AG04449 (cell line): ENCODE measurements at regions of chr3 and their contacts with region 1.

Region 1: GRCh38 chr3:113287803-113288648 is 76.7 kb downstream of the BOC start:
- DNase-seq: no peak
- H3K4me3 ChIP-seq: no peak overlapping the region
- CTCF ChIP-seq: peak; percentile 88

Region 2: DNA sequence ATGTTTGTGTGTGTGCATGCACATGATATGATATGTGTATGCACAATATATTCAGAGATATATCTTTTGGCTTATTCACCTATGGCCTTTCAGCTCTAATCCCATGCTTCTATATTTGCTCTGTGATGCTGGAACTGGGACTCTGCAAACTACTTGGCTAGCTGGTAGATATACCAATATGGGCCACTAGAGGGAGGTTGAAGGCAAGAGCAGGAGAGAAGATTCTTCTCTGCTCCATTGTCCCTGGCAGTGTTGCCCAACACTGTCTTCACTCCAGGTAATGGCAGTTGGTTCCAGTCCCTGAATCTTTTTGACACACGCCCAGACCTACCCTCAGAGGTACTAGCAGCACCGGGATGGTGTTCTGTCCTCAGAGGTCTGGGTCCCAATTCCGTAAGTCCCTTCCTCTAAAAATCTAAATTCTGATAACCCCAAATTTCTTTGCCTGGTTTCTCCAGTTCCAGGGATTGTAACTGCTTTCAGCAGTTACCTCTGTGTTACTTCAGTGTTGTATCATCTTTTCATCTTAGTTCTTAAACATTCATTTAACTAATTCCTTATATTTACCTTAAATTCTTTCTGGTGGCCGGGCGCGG is 252.5 kb before region 1 on chr3:
- CTCF ChIA-PET with region 1: interaction called, 46 read pairs
- POLR2A ChIA-PET with region 1: no interaction called
- DNase-seq: no peak
- H3K4me3 ChIP-seq: no peak overlapping the region
- CTCF ChIP-seq: peak; percentile 82

Region 3: DNA sequence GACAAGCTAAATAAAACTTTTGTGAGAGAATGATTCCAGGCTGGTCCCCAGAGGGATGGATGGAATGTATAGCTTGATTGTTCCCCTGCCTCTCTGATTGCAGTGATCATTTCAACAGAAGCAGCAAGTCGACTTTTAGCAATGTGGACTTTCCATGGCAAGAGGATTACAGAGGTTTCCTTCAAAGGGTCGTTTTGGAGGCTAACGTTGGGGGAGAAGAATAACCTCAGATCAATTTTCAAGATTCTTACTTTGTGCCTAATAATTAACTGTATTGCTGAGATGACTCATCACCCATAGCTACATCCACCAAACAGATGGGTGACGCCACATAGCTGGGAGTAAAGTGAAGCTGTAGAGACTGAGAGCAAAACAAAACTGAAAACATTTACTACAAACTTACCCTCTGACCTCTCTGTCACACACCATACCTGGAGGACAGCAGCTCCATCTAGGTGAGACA is 217.3 kb before region 1 on chr3:
- CTCF ChIA-PET with region 1: interaction called, 16 read pairs
- POLR2A ChIA-PET with region 1: no interaction called
- DNase-seq: no peak
- H3K4me3 ChIP-seq: no peak overlapping the region
- CTCF ChIP-seq: no peak

Region 4: GRCh38 chr3:113142476-113142875 is 145.6 kb before region 1 on chr3:
- CTCF ChIA-PET with region 1: interaction called, 121 read pairs
- POLR2A ChIA-PET with region 1: no interaction called
- DNase-seq: no peak
- H3K4me3 ChIP-seq: no peak overlapping the region
- CTCF ChIP-seq: no peak

Region 5: GRCh38 chr3:113255100-113255853 is 32.7 kb before region 1 on chr3:
- CTCF ChIA-PET with region 1: interaction called, 11 read pairs
- POLR2A ChIA-PET with region 1: no interaction called
- DNase-seq: no peak
- H3K4me3 ChIP-seq: no peak overlapping the region
- CTCF ChIP-seq: peak; percentile 7

Region 6: DNA sequence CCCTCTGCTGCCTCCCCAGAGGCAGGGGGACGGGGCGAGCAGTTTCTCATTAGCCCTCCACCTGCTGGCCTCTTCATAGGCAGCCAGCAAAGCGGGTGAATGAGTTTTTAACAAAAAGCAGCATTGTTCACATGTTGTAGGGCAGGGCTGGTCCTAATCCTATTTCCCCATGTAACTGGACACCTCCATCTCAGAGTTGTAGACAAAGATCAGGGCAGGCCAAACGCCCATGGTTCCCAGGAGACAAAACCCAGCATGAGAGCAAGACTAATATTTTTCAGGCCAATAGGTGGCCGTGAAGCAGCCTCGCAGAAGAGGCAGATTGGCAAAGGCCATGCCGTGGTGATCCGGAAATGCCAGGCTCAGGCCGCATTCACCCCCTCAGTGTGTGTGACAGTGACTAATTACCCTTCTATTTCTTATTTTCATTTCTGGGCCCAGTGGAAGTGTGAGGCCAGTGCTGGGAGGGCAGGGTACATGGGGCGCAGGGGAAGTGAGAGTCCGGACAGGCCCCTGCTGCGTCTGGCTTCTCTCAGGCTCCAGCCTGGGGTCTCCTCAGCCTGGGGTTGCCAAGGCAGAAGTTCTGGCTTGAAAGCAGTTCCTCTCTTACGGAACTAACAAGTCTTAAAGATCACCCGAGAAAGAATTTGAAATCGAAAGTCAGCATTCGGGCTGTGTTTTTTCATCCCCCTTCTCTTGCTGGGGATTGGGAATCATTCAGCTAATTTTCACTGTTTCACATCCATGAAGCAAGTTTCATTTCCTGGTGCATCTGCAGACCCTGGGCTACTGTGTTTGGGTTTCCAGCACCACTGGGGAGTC is 11.9 kb before region 1 on chr3:
- CTCF ChIA-PET with region 1: interaction called, 52 read pairs
- POLR2A ChIA-PET with region 1: no interaction called
- DNase-seq: no peak
- H3K4me3 ChIP-seq: peak overlapping the region; percentile 6; the same call in 1 of the 2 replicates
- CTCF ChIP-seq: no peak